Right cardiac atrium (tissue), 5 donors: ENCODE measurements at regions of chr3 and their contacts with region 1.

Region 1: DNA sequence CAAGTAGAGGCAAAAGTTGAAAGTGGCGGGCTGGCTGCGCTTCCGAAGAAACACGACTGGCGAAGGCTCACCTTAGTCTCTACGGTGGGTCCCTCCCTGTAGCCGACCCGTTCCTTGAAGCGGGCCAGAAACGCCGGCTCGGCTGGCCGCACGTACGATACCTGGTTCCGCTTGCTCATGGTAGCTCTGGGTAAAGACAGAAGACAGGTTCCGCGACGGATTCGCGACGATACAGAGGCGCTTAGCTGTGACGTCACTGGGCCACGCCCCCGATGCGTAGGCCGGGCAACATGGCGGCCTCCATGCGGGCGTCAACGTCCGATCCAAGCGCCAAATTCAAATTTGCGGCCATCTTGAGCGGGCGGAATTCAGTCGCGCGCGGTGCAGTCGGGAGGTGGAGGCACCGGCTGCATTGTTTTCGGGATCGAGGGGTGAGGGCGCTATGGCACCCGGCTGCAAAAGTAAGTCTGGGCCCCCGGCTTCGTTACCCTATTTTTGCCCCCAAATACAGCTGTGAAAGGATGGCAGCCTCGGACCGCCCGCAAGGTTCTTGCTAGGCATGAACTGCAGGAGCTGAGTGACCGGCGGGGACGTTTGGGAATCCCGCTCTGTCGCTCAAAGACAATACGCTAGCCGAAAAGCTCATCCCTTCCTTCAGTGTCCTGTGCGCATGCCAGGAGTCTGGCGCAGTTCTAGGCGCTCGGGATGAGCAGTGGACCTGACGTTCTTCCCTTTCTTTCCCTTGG is at the starts of genes KIAA1143 and KIF15:
- DNase-seq: peak; percentile 98 to 99 (median 99)
- ATAC-seq: peak; percentile 100
- H3K4me3 ChIP-seq: peak within 1 kb of the TSS; percentile 90
- H3K27ac ChIP-seq: peak within 1 kb of the TSS; percentile 15
- H3K4me1 ChIP-seq: no peaks in the 10 kb centered on the region
- H3K27me3 ChIP-seq: no peaks in the 10 kb centered on the region
- total RNA-seq, gene KIAA1143: 26.9 to 31.6 (median 28.8) TPM
- total RNA-seq, gene KIF15: 0.25 to 1.3 (median 0.71) TPM

Region 2: GRCh38 chr3:44642337-44642736 is 119.3 kb before region 1 on chr3:
- intact Hi-C with region 1: no loop called
- DNase-seq: no peak
- ATAC-seq: no peak
- H3K4me3 ChIP-seq: no peak overlapping the region
- H3K27ac ChIP-seq: no peak overlapping the region
- H3K4me1 ChIP-seq: no peaks in the 10 kb centered on the region
- H3K27me3 ChIP-seq: no peaks in the 10 kb centered on the region

Region 3: DNA sequence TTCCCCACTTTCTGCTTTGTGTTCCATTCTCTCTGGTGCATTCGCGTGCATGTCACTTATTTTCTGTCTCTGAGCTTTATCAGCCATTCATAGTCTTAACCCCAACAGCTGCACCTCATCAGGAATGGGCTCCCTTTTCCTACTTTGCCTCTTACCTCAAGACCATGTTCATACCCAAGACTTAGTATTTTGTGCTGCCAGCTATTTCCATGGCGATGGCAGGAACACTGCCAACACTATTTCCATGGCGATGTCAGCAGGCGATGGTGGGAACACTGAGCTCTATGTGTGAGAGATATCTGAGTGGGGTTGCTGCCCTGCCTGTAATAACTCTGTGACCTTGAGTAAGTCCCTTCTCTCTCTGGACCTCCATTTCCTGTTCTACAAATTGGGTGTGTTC is 107.6 kb before region 1 on chr3:
- intact Hi-C with region 1: no loop called
- DNase-seq: no peak
- ATAC-seq: no peak
- H3K4me3 ChIP-seq: no peak overlapping the region
- H3K27ac ChIP-seq: no peak overlapping the region
- H3K4me1 ChIP-seq: peaks cover 1% of the 10 kb centered on the region
- H3K27me3 ChIP-seq: no peaks in the 10 kb centered on the region

Region 4: GRCh38 chr3:44861412-44862220 is 100.0 kb after region 1 on chr3 and contains the start of gene TMEM42:
- intact Hi-C with region 1: loop called in 1 of 4 experiments (anchors 10 kb)
- DNase-seq: peak; percentile 93 to 97 (median 97)
- ATAC-seq: peak; percentile 98 to 99
- H3K4me3 ChIP-seq: peak within 1 kb of the TSS; percentile 62
- H3K27ac ChIP-seq: peak within 1 kb of the TSS; percentile 75
- H3K4me1 ChIP-seq: no peaks in the 10 kb centered on the region
- H3K27me3 ChIP-seq: no peaks in the 10 kb centered on the region
- total RNA-seq, gene TMEM42: 8.4 to 12.7 (median 10.9) TPM